ENCODE measurements at regions of chr2 and their contacts with region 1.

Region 1: GRCh38 chr2:73822276-73822675 is 6.5 kb upstream of the STAMBP start:
- DNase-seq: no peak
- ATAC-seq: no peak
- H3K4me3 ChIP-seq: no peak overlapping the region
- H3K4me3 Mint-ChIP-seq: no peak overlapping the region
- H3K27ac ChIP-seq: no peak overlapping the region
- H3K27ac Mint-ChIP-seq: no peak overlapping the region
- H3K4me1 ChIP-seq: no peaks in the 10 kb centered on the region
- H3K4me1 Mint-ChIP-seq: peaks cover 5 to 7% (median 5%) of the 10 kb centered on the region in 3 donors
- H3K27me3 ChIP-seq: no peaks in the 10 kb centered on the region
- H3K27me3 Mint-ChIP-seq: peaks cover 0 to 5% of the 10 kb centered on the region in 2 donors

Region 2: GRCh38 chr2:74020702-74021406 is 198.6 kb after region 1 on chr2:
- CTCF ChIA-PET with region 1: no interaction called
- POLR2A ChIA-PET with region 1: interaction called in 1 of 2 experiments, 10 read pairs
- DNase-seq: peak in 1 of 35 experiments; percentile 29
- ATAC-seq: no peak
- H3K4me3 ChIP-seq: no peak overlapping the region
- H3K4me3 Mint-ChIP-seq: peak overlapping the region in 1 of 3 donors; percentile 43
- H3K27ac ChIP-seq: no peak overlapping the region
- H3K27ac Mint-ChIP-seq: peak overlapping the region; percentile 28 to 73
- H3K4me1 ChIP-seq: peaks cover 22 to 42% of the 10 kb centered on the region in 2 experiments
- H3K4me1 Mint-ChIP-seq: peaks cover 65 to 73% (median 68%) of the 10 kb centered on the region in 3 donors
- H3K27me3 ChIP-seq: no peaks in the 10 kb centered on the region
- H3K27me3 Mint-ChIP-seq: no peaks in the 10 kb centered on the region